ENCODE measurements at regions of chr4 and their contacts with region 1.

Region 1: DNA sequence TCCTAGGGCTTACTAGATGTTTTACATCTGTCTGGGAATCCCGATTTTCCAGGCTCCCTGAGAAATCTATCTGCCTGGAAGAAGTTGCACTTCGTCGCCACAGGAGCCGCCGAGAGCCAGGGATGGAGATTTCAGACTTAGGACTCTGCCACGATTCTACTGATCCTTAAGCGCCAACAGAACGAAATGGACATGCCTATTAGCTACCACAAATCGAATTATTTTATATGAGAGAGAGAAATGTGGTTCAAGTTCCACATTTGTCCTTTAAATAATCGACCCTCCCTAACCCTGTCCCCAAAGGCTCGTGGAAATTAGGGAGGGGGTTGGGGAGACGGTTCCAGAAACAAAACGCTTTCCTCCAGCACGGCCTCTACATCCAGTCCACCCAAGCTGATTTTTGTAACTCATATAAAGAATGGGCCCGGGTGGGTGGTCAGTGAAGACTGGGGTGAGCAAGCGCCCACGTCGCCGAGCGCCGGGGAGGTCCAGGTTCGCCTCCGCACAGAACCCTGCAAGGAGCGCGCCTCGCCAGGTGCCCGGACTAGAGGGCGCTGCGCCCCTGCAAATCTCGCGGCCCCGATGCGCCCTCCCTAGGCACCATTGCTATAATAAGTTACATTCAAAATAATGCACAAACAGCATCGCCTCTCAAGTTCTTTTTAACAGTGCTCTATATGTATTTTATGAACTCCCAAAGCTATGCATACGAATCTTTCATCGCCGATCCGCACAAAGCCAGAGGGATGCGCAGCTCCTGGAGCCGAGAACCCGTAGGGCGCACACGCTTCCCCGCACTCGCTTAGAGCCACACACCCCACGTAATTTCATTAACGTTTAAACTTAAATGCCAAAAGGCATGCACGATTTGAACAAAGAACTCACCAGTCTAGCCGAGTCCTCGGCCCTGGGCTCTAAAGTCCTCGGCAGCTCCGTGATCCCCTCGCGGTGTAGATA is 2.1 kb upstream of the FAT1 start:
- DNase-seq: peak; percentile 90

Region 2: GRCh38 chr4:186669159-186669731 is 56.5 kb before region 1 on chr4:
- intact Hi-C with region 1: loop called (anchors 10 kb)
- DNase-seq: no peak

Region 3: DNA sequence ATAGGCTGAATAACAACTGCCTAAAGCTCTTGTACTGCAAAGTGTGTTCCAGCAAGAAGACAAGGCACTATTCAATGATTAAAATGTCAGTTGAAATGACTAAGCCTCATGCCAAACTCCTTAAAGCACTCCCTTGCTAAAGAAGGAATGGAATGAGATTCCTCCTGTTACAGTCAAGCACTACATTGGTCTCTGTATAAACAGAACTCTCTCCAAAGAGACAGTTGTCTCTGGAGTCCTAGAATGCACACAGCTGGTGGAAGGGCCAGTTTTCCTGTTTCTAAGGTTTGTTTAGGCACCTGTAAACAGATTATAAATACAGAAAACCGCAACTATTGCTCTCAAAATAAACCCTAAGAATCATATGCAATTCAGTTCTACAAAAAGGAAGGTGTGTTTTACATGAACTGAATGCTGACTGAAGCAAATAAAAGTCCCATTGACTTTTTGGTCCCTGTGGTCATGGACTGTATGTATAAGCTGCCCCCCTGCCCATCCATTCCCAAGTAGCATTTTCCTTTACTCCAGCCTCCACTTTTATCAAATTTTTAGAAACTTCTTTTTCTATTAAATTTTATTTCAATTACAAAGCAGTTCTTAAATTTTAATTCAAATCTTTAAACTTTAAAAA is 49.1 kb before region 1 on chr4:
- intact Hi-C with region 1: loop called in 1 of 2 experiments (anchors 10 kb)
- DNase-seq: no peak

Region 4: DNA sequence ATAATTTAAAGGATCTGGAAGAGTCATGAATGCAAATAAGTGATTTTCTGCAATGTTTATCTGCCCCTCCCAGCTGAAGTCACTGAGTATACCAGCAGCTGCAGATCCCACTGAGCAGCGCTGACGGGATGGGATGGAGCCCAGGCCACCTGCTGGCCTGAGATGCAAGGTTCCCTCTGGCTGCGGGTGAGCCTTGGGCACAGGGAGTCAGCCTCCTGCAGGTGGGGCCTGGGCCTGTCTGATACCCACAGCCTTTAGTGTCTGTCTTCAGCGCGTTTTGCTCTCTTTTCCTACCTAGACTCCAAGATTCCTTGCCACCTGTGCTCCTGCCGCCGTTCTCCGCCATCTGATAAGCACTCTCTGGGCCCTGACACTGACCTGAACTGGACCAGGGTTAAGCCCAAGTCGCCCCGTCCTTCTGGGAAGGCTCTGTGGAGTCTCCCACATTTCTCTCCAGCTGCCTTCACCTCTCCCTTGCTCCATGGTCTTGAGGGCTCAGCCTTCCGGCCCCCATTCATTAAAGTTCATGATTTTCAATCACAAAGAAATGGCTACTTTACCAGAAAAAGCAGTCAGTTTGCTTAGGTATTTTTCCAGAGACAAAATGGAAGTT is 221.0 kb after region 1 on chr4:
- intact Hi-C with region 1: loop called in 1 of 2 experiments (anchors 10 kb)
- DNase-seq: no peak

Measured in posterior vena cava (tissue), 2 donors.